Breast epithelium (tissue), 4 donors: ENCODE measurements at regions of chr20 and their contacts with region 1.

Region 1: GRCh38 chr20:11469795-11470435 is 447.8 kb upstream of the BTBD3 start:
- DNase-seq: no peak
- H3K4me3 ChIP-seq: no peak overlapping the region
- H3K27ac ChIP-seq: no peak overlapping the region
- H3K4me1 ChIP-seq: no peaks in the 10 kb centered on the region
- H3K27me3 ChIP-seq: no peaks in the 10 kb centered on the region
- CTCF ChIP-seq: no peak
- POLR2A ChIP-seq: no peak

Region 2: DNA sequence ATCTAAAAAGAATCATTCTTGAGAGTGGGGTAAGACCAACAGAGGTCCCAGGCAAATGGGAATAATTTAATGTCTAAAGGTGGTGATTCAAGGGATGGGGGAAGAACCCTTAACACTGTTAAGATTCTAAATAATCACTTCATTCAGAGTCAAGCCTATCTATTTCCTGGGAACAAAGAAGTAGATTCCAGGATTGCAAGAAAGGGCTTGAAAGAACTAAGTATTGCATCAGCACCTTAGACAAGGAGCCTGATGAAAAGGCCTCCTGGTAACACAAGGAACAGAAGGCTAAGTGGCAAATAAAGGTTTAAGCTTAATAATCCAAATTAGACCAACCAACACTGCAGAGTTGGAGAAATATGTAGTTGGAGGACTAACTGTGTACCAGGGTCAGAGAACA is 173.0 kb before region 1 on chr20:
- intact Hi-C with region 1: loop called (anchors 5 kb)
- DNase-seq: no peak
- H3K4me3 ChIP-seq: no peak overlapping the region
- H3K27ac ChIP-seq: no peak overlapping the region
- H3K4me1 ChIP-seq: no peaks in the 10 kb centered on the region
- H3K27me3 ChIP-seq: no peaks in the 10 kb centered on the region
- CTCF ChIP-seq: no peak
- POLR2A ChIP-seq: no peak